ENCODE measurements at regions of chr16 and their contacts with region 1.

Region 1: GRCh38 chr16:6732166-6732565 is 600.5 kb upstream of the RBFOX1 start:
- DNase-seq: no peak
- ATAC-seq: no peak
- H3K4me3 ChIP-seq: no peak overlapping the region
- H3K27ac ChIP-seq: no peak overlapping the region
- H3K4me1 ChIP-seq: no peaks in the 10 kb centered on the region
- H3K27me3 ChIP-seq: no peaks in the 10 kb centered on the region
- CTCF ChIP-seq: no peak
- EP300 ChIP-seq: no peak
- POLR2A ChIP-seq: no peak
- RAD21 ChIP-seq: no peak

Region 2: DNA sequence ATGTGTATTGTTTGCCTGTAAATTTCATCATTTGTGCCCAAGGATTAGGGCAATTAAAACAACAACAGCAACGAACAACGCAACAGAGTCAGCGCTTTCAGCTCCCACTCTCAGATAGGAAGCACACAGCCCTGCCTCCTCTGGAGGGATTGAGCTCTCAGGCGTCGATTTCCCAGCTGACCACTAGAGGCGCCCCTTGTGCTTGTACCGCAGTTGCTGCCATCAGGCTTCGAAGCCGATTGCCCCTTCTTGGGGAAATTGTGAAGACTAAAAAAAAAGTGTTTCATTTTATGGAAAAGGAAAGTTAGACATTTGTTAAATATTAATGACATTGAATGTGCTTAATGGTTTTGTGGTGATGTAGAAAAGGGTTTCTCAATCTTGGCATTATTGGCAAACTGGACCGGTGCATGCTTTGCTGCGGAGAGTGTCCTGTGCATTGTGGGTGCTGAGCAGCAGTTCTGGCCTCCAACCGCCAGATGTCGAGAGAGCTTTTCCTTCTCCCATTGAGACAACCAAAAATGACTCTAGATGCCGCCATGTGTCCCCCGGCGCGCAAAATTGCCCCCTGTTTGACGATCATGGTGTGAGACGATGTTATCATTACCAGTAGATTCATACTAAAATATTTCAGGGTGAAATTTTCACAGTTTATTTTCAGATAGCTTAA is 49.9 kb before region 1 on chr16:
- CTCF ChIA-PET with region 1: no interaction called
- POLR2A ChIA-PET with region 1: no interaction called
- RAD21 ChIA-PET with region 1: no interaction called
- SMC1A ChIA-PET with region 1: no interaction called
- in situ Hi-C with region 1: loop called (anchors 10 kb)
- intact Hi-C with region 1: no loop called
- DNase-seq: no peak
- ATAC-seq: no peak
- H3K4me3 ChIP-seq: no peak overlapping the region
- H3K27ac ChIP-seq: no peak overlapping the region
- H3K4me1 ChIP-seq: no peaks in the 10 kb centered on the region
- H3K27me3 ChIP-seq: no peaks in the 10 kb centered on the region
- CTCF ChIP-seq: peak; percentile 39 to 51 (median 40); a peak in 5 of 6 replicates
- EP300 ChIP-seq: no peak
- POLR2A ChIP-seq: no peak
- RAD21 ChIP-seq: no peak

Region 3: DNA sequence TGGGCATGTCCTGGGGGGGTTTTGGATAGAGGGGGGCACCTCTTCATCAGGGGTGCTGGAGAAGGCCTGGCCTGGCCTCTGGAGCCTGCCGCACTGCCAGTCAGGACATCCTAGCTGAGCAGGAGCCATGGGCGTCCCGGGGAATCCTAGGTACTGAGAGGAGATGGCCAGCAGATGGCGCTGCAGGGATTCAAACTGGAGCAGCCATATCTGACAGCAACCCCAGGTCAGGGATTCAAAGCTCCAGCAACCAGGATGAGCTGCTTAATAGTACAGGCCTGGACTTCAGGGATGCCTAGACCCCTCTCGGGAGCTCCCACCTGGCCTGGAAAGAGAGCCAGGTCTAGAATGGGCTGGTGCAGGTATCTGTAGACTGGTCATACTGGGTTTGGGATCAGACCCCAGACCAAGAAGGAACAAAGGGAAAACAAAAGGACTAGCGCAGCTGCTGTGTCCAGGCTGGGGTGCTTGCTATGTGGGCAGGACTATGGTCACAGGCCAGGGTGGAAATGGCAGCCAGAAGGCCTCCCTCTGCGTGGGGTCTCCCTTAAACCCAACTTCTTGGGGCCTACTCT is 293.5 kb after region 1 on chr16:
- CTCF ChIA-PET with region 1: no interaction called
- POLR2A ChIA-PET with region 1: no interaction called
- RAD21 ChIA-PET with region 1: no interaction called
- SMC1A ChIA-PET with region 1: no interaction called
- in situ Hi-C with region 1: no loop called
- intact Hi-C with region 1: no loop called
- DNase-seq: no peak
- ATAC-seq: peak; percentile 50; the same call in 1 of the 3 replicates
- H3K4me3 ChIP-seq: no peak overlapping the region
- H3K27ac ChIP-seq: no peak overlapping the region
- H3K4me1 ChIP-seq: no peaks in the 10 kb centered on the region
- H3K27me3 ChIP-seq: no peaks in the 10 kb centered on the region
- CTCF ChIP-seq: peak; percentile 22 to 46 (median 41); a peak in 3 of 6 replicates
- EP300 ChIP-seq: no peak
- POLR2A ChIP-seq: no peak
- RAD21 ChIP-seq: peak; percentile 33; the same call in 1 of the 2 replicates

Region 4: DNA sequence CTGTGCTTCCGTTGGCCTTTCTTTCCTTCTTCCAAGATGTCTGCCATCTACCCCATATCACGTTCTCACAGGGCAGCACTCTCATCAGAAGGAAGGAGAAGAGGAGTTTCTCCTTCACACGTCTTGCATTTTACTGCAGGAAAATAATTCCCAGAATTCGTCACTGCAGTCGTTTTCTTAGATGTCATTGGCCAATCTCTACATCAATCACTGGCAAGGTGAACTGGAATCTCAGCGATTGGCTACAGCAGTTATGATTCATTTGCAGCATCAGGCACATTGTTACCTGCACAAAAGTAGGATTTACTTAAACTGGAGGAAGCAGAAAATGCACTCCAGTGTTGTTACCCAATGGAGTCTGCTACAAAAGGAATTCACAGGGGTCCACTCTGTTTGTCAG is 323.3 kb after region 1 on chr16:
- CTCF ChIA-PET with region 1: no interaction called
- POLR2A ChIA-PET with region 1: no interaction called
- RAD21 ChIA-PET with region 1: no interaction called
- SMC1A ChIA-PET with region 1: no interaction called
- in situ Hi-C with region 1: no loop called
- intact Hi-C with region 1: no loop called
- DNase-seq: no peak
- ATAC-seq: no peak
- H3K4me3 ChIP-seq: no peak overlapping the region
- H3K27ac ChIP-seq: no peak overlapping the region
- H3K4me1 ChIP-seq: no peaks in the 10 kb centered on the region
- H3K27me3 ChIP-seq: no peaks in the 10 kb centered on the region
- CTCF ChIP-seq: no peak
- EP300 ChIP-seq: no peak
- POLR2A ChIP-seq: no peak
- RAD21 ChIP-seq: no peak